HEK293T (cell line): ENCODE measurements at regions of chr17 and their contacts with region 1.

Region 1: GRCh38 chr17:29111816-29112499 is 68.2 kb downstream of the MYO18A start:
- DNase-seq: peak; percentile 58

Region 2: GRCh38 chr17:28773736-28774135 is 338.2 kb before region 1 on chr17:
- CTCF ChIA-PET with region 1: interaction called, 10 read pairs
- POLR2A ChIA-PET with region 1: no interaction called
- DNase-seq: no peak

Region 3: DNA sequence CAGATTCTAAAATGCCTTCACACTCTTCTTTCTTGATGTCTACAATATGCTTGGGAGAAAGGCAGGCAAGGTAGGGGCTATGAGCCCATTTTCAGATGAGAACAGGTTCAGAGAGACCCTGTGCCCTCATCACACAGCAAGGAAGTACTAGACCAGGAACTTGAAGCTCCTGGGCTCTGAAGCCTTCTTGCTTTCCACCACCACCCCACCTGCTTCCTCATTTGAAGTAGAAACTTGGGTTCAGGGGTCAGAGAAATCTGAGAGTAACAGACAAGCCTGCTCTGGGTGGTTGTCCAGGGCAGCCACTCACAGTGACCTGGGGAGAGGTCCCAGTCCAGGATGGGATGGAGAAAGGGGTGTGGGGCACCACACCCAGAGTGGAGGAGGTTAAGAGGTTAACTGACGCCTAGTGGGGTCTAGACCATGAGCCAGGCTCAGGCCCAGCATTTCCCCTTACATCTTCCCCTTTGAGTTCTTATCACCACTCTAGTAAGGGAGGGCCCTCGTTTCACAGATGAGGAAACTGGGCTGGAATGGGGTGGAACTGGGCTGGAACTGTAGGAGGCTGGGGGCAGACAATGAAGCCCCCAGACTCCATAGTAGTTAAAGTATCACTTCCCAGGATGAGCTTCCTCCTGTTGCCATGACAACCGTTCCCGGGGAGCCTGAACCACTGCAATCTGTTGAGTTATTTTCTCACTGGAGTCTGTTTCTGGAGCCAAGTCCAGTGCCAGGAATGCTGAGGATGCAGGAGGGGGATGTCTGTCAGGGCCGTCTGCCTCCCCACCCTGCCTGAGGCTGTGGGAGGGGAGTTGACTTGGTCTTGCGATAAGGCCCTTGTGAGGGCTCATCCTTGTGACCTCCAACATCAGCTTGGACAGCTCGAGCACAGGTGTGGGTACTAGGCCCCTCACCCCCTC is 144.5 kb before region 1 on chr17:
- CTCF ChIA-PET with region 1: interaction called, 116 read pairs
- POLR2A ChIA-PET with region 1: interaction called, 10 read pairs
- DNase-seq: no peak

Region 4: GRCh38 chr17:29124117-29124924 is 12.4 kb after region 1 on chr17:
- CTCF ChIA-PET with region 1: interaction called, 30 read pairs
- POLR2A ChIA-PET with region 1: interaction called, 3 read pairs
- DNase-seq: peak; percentile 62